ENCODE measurements at regions of chr15 and their contacts with region 1.

Region 1: DNA sequence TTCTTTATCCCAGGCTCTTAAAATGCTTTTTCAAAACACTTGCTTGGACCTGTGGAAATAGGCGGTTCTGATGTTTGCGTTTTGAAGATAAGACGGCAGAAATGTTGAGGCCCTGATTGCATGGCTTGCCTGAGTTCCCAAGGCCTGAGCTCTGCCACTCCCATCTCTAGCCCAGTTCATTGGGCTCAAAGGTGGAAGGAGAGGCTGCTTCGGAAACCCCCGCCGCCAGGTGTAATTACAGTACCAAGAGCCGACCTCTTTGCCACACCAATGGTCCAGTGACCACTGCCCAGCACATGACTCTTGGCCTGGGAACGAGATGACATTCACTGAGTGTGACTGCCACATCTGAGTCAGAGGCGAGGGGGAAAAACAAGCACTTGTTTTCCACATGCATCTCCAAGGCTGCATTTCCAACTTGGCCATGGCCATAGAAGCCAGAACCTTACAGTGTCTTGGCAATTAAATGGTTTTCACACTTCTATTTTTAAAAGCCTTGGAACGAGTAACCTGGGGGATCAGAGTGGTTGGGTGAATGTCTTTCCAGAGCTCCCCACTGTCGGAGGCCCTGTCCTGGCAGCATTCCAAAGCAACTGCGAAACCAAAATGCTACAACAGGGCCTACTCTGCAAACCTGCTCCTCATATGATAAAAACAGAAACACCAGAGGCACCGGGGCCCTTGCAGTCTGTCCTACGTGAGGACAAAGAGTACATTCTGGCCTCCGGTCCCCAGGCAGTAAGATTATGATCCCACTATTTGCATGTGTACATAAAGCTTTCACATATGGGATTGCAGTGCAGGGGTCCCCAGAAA is 63.8 kb upstream of the CGNL1 start:
- DNase-seq: no peak
- ATAC-seq: peak; percentile 21 to 83 (median 62)
- H3K4me3 ChIP-seq: no peak overlapping the region
- H3K27ac ChIP-seq: peak overlapping the region in 5 of 10 donors; percentile 3 to 55 (median 35)
- H3K4me1 ChIP-seq: peaks cover 0 to 10% (median 0%) of the 10 kb centered on the region in 9 donors
- H3K27me3 ChIP-seq: no peaks in the 10 kb centered on the region
- CTCF ChIP-seq: no peak

Region 2: GRCh38 chr15:57025264-57025939 is 287.1 kb before region 1 on chr15:
- intact Hi-C with region 1: loop called in 1 of 10 experiments (anchors 10 kb)
- DNase-seq: no peak
- ATAC-seq: no peak
- H3K4me3 ChIP-seq: no peak overlapping the region
- H3K27ac ChIP-seq: no peak overlapping the region
- H3K4me1 ChIP-seq: peaks cover 0 to 26% (median 10%) of the 10 kb centered on the region in 9 donors
- H3K27me3 ChIP-seq: no peaks in the 10 kb centered on the region
- CTCF ChIP-seq: no peak

Region 3: GRCh38 chr15:57340682-57341259 is 28.2 kb after region 1 on chr15:
- intact Hi-C with region 1: no loop called
- DNase-seq: peak in 1 of 2 donors; percentile 54
- ATAC-seq: peak in 7 of 8 donors; percentile 37 to 58 (median 51)
- H3K4me3 ChIP-seq: no peak overlapping the region
- H3K27ac ChIP-seq: no peak overlapping the region
- H3K4me1 ChIP-seq: peaks cover 0 to 34% (median 13%) of the 10 kb centered on the region in 9 donors
- H3K27me3 ChIP-seq: no peaks in the 10 kb centered on the region
- CTCF ChIP-seq: peak; percentile 74 to 94 (median 89)

Measured in heart right ventricle (tissue), 16 donors.